CD8-positive, alpha-beta T cell (primary cell): ENCODE measurements at regions of chr1 and their contacts with region 1.

Region 1: GRCh38 chr1:198088360-198089071 is 68.3 kb upstream of the NEK7 start:
- DNase-seq: peak in 4 of 9 experiments; percentile 7 to 66 (median 30)
- ATAC-seq: peak; percentile 51
- H3K4me3 ChIP-seq: no peak overlapping the region
- H3K4me3 Mint-ChIP-seq: no peak overlapping the region
- H3K27ac ChIP-seq: no peak overlapping the region
- H3K27ac Mint-ChIP-seq: no peak overlapping the region
- H3K4me1 ChIP-seq: no peaks in the 10 kb centered on the region
- H3K4me1 Mint-ChIP-seq: peaks cover 3% of the 10 kb centered on the region
- H3K27me3 ChIP-seq: no peaks in the 10 kb centered on the region
- H3K27me3 Mint-ChIP-seq: no peaks in the 10 kb centered on the region
- CTCF ChIP-seq: peak; percentile 78

Region 2: DNA sequence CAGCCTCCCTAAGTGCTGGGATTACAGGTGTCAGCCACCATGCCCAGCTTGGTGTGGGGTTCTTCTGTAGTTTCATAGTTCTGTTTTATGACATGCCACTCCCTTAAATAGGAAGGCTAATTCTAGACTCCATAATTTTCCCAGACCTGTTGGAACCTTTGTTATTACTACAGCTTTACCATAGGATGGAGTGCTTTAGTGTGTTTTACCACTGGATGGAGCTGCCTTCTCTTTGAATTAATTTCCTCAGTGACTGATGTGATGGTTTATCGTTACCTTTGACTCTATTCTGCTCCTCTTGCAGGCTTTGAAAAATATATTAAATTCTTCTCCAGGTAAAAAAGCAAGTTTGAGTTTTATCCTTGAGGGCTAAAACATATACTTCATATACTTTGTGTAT is 16.3 kb before region 1 on chr1:
- CTCF ChIA-PET with region 1: no interaction called
- POLR2A ChIA-PET with region 1: no interaction called
- intact Hi-C with region 1: no loop called
- DNase-seq: no peak
- ATAC-seq: no peak
- H3K4me3 ChIP-seq: no peak overlapping the region
- H3K4me3 Mint-ChIP-seq: no peak overlapping the region
- H3K27ac ChIP-seq: no peak overlapping the region
- H3K27ac Mint-ChIP-seq: no peak overlapping the region
- H3K4me1 ChIP-seq: no peaks in the 10 kb centered on the region
- H3K4me1 Mint-ChIP-seq: no peaks in the 10 kb centered on the region
- H3K27me3 ChIP-seq: peaks cover 0 to 4% of the 10 kb centered on the region in 2 experiments
- H3K27me3 Mint-ChIP-seq: peaks cover 8% of the 10 kb centered on the region
- CTCF ChIP-seq: no peak

Region 3: GRCh38 chr1:198102454-198102827 is 13.9 kb after region 1 on chr1:
- CTCF ChIA-PET with region 1: interaction called, 18 read pairs
- POLR2A ChIA-PET with region 1: no interaction called
- intact Hi-C with region 1: no loop called
- DNase-seq: peak in 2 of 9 experiments; percentile 54 to 80
- ATAC-seq: peak; percentile 83
- H3K4me3 ChIP-seq: no peak overlapping the region
- H3K4me3 Mint-ChIP-seq: peak overlapping the region; percentile 40
- H3K27ac ChIP-seq: peak overlapping the region in 1 of 2 experiments; percentile 44
- H3K27ac Mint-ChIP-seq: peak overlapping the region; percentile 35
- H3K4me1 ChIP-seq: peaks cover 19% of the 10 kb centered on the region
- H3K4me1 Mint-ChIP-seq: peaks cover 27% of the 10 kb centered on the region
- H3K27me3 ChIP-seq: no peaks in the 10 kb centered on the region
- H3K27me3 Mint-ChIP-seq: no peaks in the 10 kb centered on the region
- CTCF ChIP-seq: no peak

Region 4: DNA sequence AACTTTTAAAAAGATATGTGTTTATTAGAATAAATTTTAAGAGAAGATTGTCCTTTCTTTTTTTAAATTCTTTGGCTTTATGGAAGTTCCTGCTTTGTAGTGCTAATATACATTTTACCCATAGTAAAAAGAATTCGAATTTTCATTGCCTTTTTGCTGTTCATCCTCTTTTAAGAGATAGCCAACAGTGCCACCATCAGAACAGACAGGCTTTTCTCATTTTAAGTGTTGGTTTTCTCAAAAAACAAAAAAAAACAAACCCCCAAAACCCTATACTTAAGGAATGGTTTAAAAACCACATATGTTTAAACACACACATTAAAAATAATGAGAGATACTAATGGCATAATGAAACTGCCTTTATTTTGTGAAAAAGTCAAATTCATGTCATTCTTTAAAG is 187.1 kb after region 1 on chr1:
- CTCF ChIA-PET with region 1: interaction called, 4 read pairs
- POLR2A ChIA-PET with region 1: no interaction called
- intact Hi-C with region 1: loop called (anchors 1 to 5 kb)
- DNase-seq: peak in 1 of 9 experiments; percentile 28
- ATAC-seq: no peak
- H3K4me3 ChIP-seq: no peak overlapping the region
- H3K4me3 Mint-ChIP-seq: no peak overlapping the region
- H3K27ac ChIP-seq: no peak overlapping the region
- H3K27ac Mint-ChIP-seq: no peak overlapping the region
- H3K4me1 ChIP-seq: no peaks in the 10 kb centered on the region
- H3K4me1 Mint-ChIP-seq: peaks cover 12% of the 10 kb centered on the region
- H3K27me3 ChIP-seq: no peaks in the 10 kb centered on the region
- H3K27me3 Mint-ChIP-seq: no peaks in the 10 kb centered on the region
- CTCF ChIP-seq: no peak

Region 5: DNA sequence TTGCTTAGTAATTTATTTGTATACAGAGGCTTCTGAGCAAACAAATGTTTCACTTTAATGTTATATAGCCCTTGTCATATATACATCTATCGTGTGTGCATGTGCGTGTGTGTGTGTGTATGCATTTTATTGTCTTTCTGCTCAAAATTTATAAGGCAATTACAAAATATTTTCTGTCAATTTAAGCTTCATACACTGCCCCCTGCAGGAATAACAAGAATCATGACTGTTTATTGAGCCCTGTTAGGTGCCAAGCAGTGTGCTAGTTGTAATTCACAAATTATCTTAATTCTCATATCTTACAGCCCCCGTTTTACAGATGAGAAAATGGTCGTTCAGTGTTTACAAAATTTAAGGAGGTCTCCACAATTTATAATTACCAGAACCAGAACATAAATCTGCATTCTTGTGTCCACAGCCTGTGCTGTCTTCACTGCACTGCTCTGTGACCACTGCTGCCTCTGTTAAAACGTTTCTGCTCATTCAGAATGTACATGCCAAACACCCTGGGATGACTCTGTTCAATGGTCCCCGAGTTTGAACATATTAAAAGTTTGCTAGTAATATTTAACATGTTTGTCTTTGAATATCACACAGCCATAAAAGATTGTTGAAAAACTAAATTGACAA is 270.6 kb after region 1 on chr1:
- CTCF ChIA-PET with region 1: interaction called, 5 read pairs
- POLR2A ChIA-PET with region 1: no interaction called
- intact Hi-C with region 1: loop called (anchors 1 to 5 kb)
- DNase-seq: peak in 2 of 9 experiments; percentile 32 to 49
- ATAC-seq: no peak
- H3K4me3 ChIP-seq: no peak overlapping the region
- H3K4me3 Mint-ChIP-seq: no peak overlapping the region
- H3K27ac ChIP-seq: no peak overlapping the region
- H3K27ac Mint-ChIP-seq: no peak overlapping the region
- H3K4me1 ChIP-seq: no peaks in the 10 kb centered on the region
- H3K4me1 Mint-ChIP-seq: no peaks in the 10 kb centered on the region
- H3K27me3 ChIP-seq: no peaks in the 10 kb centered on the region
- H3K27me3 Mint-ChIP-seq: no peaks in the 10 kb centered on the region
- CTCF ChIP-seq: peak; percentile 54

Region 6: GRCh38 chr1:198465201-198466144 is 377.0 kb after region 1 on chr1:
- CTCF ChIA-PET with region 1: interaction called, 9 read pairs
- POLR2A ChIA-PET with region 1: no interaction called
- intact Hi-C with region 1: loop called (anchors 1 to 2 kb)
- DNase-seq: peak in 2 of 9 experiments; percentile 52 to 64
- ATAC-seq: peak; percentile 58
- H3K4me3 ChIP-seq: no peak overlapping the region
- H3K4me3 Mint-ChIP-seq: no peak overlapping the region
- H3K27ac ChIP-seq: no peak overlapping the region
- H3K27ac Mint-ChIP-seq: no peak overlapping the region
- H3K4me1 ChIP-seq: no peaks in the 10 kb centered on the region
- H3K4me1 Mint-ChIP-seq: peaks cover 3% of the 10 kb centered on the region
- H3K27me3 ChIP-seq: no peaks in the 10 kb centered on the region
- H3K27me3 Mint-ChIP-seq: no peaks in the 10 kb centered on the region
- CTCF ChIP-seq: peak; percentile 75

Region 7: DNA sequence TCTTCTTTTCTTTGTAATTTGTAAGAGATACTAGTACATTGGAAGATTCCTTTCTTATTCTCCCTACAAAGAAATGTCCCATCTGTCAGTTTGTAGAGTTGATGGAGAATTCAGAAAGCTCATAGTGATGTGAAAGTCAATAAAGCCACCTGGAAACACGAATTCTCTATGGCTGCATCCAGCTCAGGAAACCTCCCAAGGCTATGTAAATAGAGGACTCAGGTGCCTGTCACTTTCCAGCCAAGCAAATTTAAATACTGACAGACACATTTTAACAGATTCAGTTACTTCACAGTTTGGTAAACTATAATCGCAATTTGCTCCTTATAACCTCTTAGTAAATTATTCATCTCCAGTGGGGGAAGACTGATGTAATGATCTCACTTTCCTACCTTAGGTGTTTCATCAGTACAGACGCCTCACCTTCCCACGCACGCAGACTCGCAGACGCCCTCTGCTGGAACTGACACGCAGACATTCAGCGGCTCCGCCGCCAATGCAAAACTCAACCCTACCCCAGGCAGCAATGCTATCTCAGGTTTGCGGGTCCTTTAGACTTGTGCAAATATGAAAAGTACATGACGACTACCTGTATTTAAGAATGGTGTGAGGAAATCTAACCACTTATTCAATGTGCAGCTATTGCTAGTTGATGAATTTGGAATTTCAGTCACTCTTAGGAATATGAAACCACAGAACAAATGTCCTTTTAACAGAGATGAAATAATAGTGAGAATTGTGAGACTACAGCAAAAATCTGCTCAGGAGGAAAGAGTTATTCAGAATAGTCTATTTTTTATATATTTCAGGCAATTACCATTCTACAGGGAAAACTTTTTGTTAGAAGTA is 610.9 kb after region 1 on chr1:
- CTCF ChIA-PET with region 1: interaction called, 3 read pairs
- POLR2A ChIA-PET with region 1: no interaction called
- intact Hi-C with region 1: loop called in 1 of 2 experiments (anchors 5 kb)
- DNase-seq: peak; percentile 45 to 82 (median 73)
- ATAC-seq: peak; percentile 86
- H3K4me3 ChIP-seq: no peak overlapping the region
- H3K4me3 Mint-ChIP-seq: peak overlapping the region; percentile 8
- H3K27ac ChIP-seq: no peak overlapping the region
- H3K27ac Mint-ChIP-seq: peak overlapping the region; percentile 72
- H3K4me1 ChIP-seq: peaks cover 71% of the 10 kb centered on the region
- H3K4me1 Mint-ChIP-seq: peaks cover 83% of the 10 kb centered on the region
- H3K27me3 ChIP-seq: no peaks in the 10 kb centered on the region
- H3K27me3 Mint-ChIP-seq: no peaks in the 10 kb centered on the region
- CTCF ChIP-seq: peak; percentile 52